ENCODE measurements at regions of chr14 and their contacts with region 1.

Region 1: GRCh38 chr14:77076113-77076631 is 21.9 kb upstream of the CIPC start:
- DNase-seq: peak; percentile 89
- H3K4me3 ChIP-seq: no peak overlapping the region
- H3K27ac ChIP-seq: peak overlapping the region; percentile 86
- H3K4me1 ChIP-seq: peaks cover 14% of the 10 kb centered on the region
- H3K27me3 ChIP-seq: no peaks in the 10 kb centered on the region
- CTCF ChIP-seq: no peak
- POLR2A ChIP-seq: no peak

Region 2: GRCh38 chr14:77086017-77086736 is 10.0 kb after region 1 on chr14:
- CTCF ChIA-PET with region 1: interaction called, 17 read pairs
- POLR2A ChIA-PET with region 1: no interaction called
- dilution Hi-C with region 1: no loop called
- intact Hi-C with region 1: no loop called
- DNase-seq: no peak
- H3K4me3 ChIP-seq: no peak overlapping the region
- H3K27ac ChIP-seq: no peak overlapping the region
- H3K4me1 ChIP-seq: no peaks in the 10 kb centered on the region
- H3K27me3 ChIP-seq: peaks cover 13 to 24% of the 10 kb centered on the region in 2 experiments
- CTCF ChIP-seq: no peak
- POLR2A ChIP-seq: no peak

Region 3: GRCh38 chr14:77092676-77093075 is 16.5 kb after region 1 on chr14:
- CTCF ChIA-PET with region 1: interaction called, 27 read pairs
- POLR2A ChIA-PET with region 1: no interaction called
- dilution Hi-C with region 1: no loop called
- intact Hi-C with region 1: loop called (anchors 1 kb)
- DNase-seq: no peak
- H3K4me3 ChIP-seq: no peak overlapping the region
- H3K27ac ChIP-seq: no peak overlapping the region
- H3K4me1 ChIP-seq: peaks cover 7% of the 10 kb centered on the region
- H3K27me3 ChIP-seq: peaks cover 3 to 13% of the 10 kb centered on the region in 2 experiments
- CTCF ChIP-seq: no peak
- POLR2A ChIP-seq: no peak

Region 4: GRCh38 chr14:77097700-77098528 is 21.7 kb after region 1 on chr14 and contains the start of gene CIPC:
- CTCF ChIA-PET with region 1: interaction called, 27 read pairs
- POLR2A ChIA-PET with region 1: no interaction called
- dilution Hi-C with region 1: no loop called
- intact Hi-C with region 1: loop called (anchors 1 kb)
- DNase-seq: peak; percentile 99
- H3K4me3 ChIP-seq: peak within 1 kb of the TSS; percentile 30 to 72 (median 66)
- H3K27ac ChIP-seq: peak within 1 kb of the TSS; percentile 57
- H3K4me1 ChIP-seq: peaks cover 27% of the 10 kb centered on the region
- H3K27me3 ChIP-seq: no peaks in the 10 kb centered on the region
- CTCF ChIP-seq: no peak
- POLR2A ChIP-seq: no peak
- total RNA-seq, gene CIPC: 17.4 and 17.7 TPM in 2 replicates

Region 5: GRCh38 chr14:77139540-77140358 is 63.6 kb after region 1 on chr14:
- CTCF ChIA-PET with region 1: no interaction called
- POLR2A ChIA-PET with region 1: no interaction called
- dilution Hi-C with region 1: no loop called
- intact Hi-C with region 1: loop called (anchors 2 kb)
- DNase-seq: no peak
- H3K4me3 ChIP-seq: peak overlapping the region in 1 of 3 experiments; percentile 9
- H3K27ac ChIP-seq: no peak overlapping the region
- H3K4me1 ChIP-seq: peaks cover 13% of the 10 kb centered on the region
- H3K27me3 ChIP-seq: peaks cover 47 to 49% of the 10 kb centered on the region in 2 experiments
- CTCF ChIP-seq: peak; percentile 67 to 89
- POLR2A ChIP-seq: no peak

Measured in endothelial cell of umbilical vein (primary cell).